ENCODE measurements at regions of chrX and their contacts with region 1.

Region 1: GRCh38 chrX:53317365-53318069 is 36.1 kb upstream of the IQSEC2 start:
- ATAC-seq: peak; percentile 65 to 82 (median 74)
- H3K4me3 ChIP-seq: peak overlapping the region in 2 of 5 donors; percentile 5 to 18
- H3K27ac ChIP-seq: no peak overlapping the region
- H3K4me1 ChIP-seq: peaks cover 4 to 6% of the 10 kb centered on the region in 2 donors

Region 2: DNA sequence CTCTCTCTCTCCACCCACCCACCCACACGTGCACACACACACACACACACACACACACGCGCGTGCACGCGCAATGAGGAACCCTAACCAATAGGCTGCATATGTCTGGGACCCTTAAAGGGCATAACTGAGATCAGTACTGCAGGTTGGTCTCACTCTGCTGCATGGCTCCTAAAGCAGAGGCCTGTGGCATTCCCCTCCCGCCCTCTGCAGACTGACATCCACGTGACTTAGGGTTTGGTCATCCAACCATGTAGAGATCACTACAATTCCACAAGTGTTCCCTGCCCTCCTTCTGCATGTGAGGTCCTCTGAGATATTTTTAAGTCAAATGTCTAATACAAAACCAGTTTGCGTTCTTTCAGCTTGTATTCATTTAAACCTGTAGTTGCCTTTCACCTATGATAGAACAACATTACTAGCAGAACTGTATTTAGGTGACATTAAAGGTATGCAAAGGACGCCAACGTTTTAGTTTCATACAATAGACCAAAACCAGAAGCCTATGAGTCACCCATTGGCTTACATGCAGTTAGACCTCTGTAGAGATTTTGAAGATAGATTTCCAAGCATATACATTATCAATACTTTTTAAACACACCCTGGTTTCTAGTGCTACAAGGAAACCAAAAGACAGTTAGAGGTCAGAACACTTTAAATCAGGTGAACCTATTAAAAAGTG is 496.3 kb before region 1 on chrX:
- in situ Hi-C with region 1: no loop called
- ATAC-seq: no peak
- H3K4me3 ChIP-seq: no peak overlapping the region
- H3K27ac ChIP-seq: no peak overlapping the region
- H3K4me1 ChIP-seq: no peaks in the 10 kb centered on the region

Region 3: GRCh38 chrX:53171356-53171755 is 146.2 kb before region 1 on chrX:
- in situ Hi-C with region 1: no loop called
- ATAC-seq: no peak
- H3K4me3 ChIP-seq: no peak overlapping the region
- H3K27ac ChIP-seq: no peak overlapping the region
- H3K4me1 ChIP-seq: no peaks in the 10 kb centered on the region

Region 4: DNA sequence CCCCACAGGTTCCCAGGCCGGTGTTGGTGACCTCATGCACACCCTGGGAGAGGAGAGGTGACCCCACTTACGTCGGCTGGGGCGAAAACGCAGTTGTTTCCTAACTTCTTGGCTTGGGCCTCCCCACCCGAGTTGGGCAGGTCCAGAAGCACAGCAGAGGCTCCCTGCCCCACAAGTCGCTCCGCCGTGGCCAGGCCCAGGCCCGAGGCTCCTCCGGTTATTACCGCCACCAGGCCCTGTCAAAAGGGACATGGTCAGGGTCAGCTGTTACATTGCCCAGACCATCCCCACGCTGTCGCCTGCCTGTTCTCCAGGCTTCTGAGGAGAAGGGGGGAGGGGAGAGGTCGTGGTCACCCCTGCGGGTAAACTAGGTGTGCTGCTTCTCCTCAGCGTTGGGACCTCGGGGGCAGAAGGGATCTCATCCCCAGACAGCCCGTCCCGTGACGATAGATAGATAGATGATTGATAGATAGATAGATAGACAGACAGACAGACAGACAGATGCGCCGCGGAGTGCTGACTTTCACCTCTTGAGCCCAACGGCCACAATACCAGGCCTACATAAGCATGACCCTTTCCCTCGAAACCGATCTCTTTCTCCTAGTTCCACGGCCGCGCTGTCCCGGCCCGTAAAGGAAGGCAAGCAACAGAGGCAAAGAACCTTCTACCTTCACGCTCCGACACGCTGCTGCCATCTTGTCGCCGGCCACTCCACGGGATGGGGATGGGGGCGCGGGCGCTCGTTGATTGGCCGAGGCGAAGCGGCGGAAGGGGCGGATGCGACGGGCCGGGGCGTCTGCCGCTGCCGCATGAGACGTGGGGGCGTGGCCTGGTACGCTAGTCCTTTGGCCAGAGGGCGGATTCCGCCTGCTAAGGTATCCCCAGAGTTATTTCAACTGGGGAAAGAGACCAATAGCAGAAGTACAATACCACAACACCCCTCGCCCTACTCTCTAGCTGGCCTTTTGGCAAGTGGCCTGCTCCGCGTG is 116.4 kb after region 1 on chrX and contains the start of gene HSD17B10:
- in situ Hi-C with region 1: loop called in 1 of 9 experiments (anchors 25 kb)
- ATAC-seq: peak; percentile 96 to 99 (median 98)
- H3K4me3 ChIP-seq: peak within 1 kb of the TSS; percentile 39 to 88 (median 71)
- H3K27ac ChIP-seq: peak within 1 kb of the TSS; percentile 72 to 77
- H3K4me1 ChIP-seq: peaks cover 0 to 4% of the 10 kb centered on the region in 2 donors
- total RNA-seq, gene HSD17B10: 42.4 to 147 (median 88.9) TPM

Measured in motor neuron (in vitro differentiated cells).